H1 (cell line): ENCODE measurements at regions of chr2 and their contacts with region 1.

Region 1: GRCh38 chr2:196453613-196454047 is 185.9 kb upstream of the CCDC150 start:
- DNase-seq: peak in 1 of 2 experiments; percentile 5
- H3K4me3 ChIP-seq: no peak overlapping the region
- H3K27ac ChIP-seq: no peak overlapping the region
- H3K4me1 ChIP-seq: no peaks in the 10 kb centered on the region
- H3K27me3 ChIP-seq: no peaks in the 10 kb centered on the region
- CTCF ChIP-seq: peak; percentile 7 to 68 (median 62)
- EP300 ChIP-seq: no peak
- POLR2A ChIP-seq: no peak
- RAD21 ChIP-seq: peak; percentile 80 to 84

Region 2: DNA sequence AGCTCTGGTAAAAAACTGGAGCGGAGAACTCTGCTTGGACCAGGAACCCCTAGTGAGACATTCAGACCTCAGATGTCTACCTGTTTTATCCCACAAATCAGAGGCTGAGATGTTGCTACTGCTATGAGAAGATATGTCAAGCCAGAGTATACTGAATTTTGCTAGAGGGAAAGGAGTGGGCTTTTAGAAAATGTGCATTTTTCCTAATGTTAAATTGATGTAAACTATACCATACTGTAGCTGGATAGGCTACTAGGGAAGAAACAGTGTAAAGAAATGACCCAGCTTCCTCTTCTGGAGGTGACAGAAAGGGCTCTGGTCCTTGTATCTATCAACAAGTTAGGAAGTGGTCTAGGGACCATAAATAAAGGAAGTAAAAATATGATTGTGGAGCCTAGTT is 731.6 kb before region 1 on chr2:
- CTCF ChIA-PET with region 1: no interaction called
- POLR2A ChIA-PET with region 1: no interaction called
- DNase-seq: no peak
- H3K4me3 ChIP-seq: no peak overlapping the region
- H3K27ac ChIP-seq: no peak overlapping the region
- H3K4me1 ChIP-seq: 0 out of 7 replicates have a peak, but pooled peaks cover 0 to 4% (median 0%) of the 10 kb centered on the region in 4 experiments
- H3K27me3 ChIP-seq: no peaks in the 10 kb centered on the region
- CTCF ChIP-seq: no peak
- EP300 ChIP-seq: no peak
- POLR2A ChIP-seq: no peak
- RAD21 ChIP-seq: no peak

Region 3: DNA sequence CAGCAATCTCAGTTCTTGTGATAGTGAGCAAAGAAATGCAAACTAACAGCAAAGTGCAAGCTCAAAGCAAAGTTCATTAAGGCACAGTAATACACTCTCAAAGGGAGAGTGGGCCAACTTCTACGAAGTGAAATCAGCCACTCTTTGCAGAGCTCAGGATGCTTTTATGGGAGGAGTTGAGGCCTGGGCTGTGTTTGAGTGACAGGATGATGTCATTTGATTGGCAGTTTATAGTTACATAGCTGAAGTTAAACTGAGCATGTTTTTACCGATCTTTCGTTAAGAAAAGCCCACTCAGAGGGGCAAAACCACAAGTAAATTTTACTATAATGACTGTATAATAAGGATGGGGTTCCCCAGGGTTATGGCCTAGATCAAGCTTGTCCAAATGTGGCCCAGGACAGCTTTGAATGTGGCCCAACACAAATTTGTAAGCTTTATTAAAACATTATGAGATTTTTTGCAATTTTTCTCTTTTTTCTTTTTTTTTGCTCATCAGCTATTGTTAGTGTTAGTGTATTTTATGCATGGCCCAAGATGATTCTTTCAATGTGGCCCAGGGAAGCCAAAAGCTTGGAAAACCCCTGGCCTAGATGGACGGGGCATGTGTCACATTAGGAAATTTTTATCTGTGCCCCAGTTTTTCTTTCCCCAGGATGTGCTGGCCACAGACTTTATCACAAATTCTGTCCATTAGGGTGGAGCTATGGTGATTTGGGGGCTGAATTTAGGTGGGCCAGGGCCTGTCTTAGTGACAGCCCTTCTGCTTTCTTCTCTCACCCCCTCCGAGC is 376.7 kb before region 1 on chr2:
- CTCF ChIA-PET with region 1: interaction called, 15 read pairs
- POLR2A ChIA-PET with region 1: no interaction called
- DNase-seq: no peak
- H3K4me3 ChIP-seq: no peak overlapping the region
- H3K27ac ChIP-seq: no peak overlapping the region
- H3K4me1 ChIP-seq: no peaks in the 10 kb centered on the region; a peak in 1 of 7 replicates
- H3K27me3 ChIP-seq: no peaks in the 10 kb centered on the region
- CTCF ChIP-seq: no peak
- EP300 ChIP-seq: no peak
- POLR2A ChIP-seq: no peak
- RAD21 ChIP-seq: no peak

Region 4: GRCh38 chr2:196403471-196403870 is 50.2 kb before region 1 on chr2:
- CTCF ChIA-PET with region 1: interaction called, 16 read pairs
- POLR2A ChIA-PET with region 1: no interaction called
- DNase-seq: no peak
- H3K4me3 ChIP-seq: no peak overlapping the region
- H3K27ac ChIP-seq: no peak overlapping the region
- H3K4me1 ChIP-seq: no peaks in the 10 kb centered on the region
- H3K27me3 ChIP-seq: no peaks in the 10 kb centered on the region
- CTCF ChIP-seq: no peak
- EP300 ChIP-seq: no peak
- POLR2A ChIP-seq: no peak
- RAD21 ChIP-seq: no peak

Region 5: DNA sequence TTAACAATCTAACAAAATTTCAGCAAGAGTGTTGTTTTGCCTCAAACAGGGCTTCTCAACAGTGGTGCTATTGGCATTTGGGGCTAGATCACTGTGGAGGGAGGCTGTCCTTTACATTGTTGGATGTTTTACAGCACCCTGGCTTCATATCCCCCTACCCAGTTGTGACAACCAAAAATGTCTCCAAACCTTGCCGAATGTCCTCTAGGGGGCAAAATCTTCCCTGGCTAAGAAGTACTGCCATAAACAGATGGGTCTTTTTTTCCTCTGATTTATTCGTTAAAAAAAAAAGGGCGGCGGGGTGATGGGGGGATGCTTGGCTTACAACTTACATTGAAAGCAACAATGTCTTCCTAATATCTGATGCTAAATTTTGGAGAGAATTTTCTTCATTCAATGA is 21.7 kb before region 1 on chr2:
- CTCF ChIA-PET with region 1: interaction called, 30 read pairs
- POLR2A ChIA-PET with region 1: no interaction called
- DNase-seq: peak in 1 of 2 experiments; percentile 9
- H3K4me3 ChIP-seq: no peak overlapping the region
- H3K27ac ChIP-seq: no peak overlapping the region
- H3K4me1 ChIP-seq: no peaks in the 10 kb centered on the region
- H3K27me3 ChIP-seq: no peaks in the 10 kb centered on the region
- CTCF ChIP-seq: peak; percentile 19 to 63 (median 59)
- EP300 ChIP-seq: no peak
- POLR2A ChIP-seq: no peak
- RAD21 ChIP-seq: peak; percentile 58 to 69

Region 6: DNA sequence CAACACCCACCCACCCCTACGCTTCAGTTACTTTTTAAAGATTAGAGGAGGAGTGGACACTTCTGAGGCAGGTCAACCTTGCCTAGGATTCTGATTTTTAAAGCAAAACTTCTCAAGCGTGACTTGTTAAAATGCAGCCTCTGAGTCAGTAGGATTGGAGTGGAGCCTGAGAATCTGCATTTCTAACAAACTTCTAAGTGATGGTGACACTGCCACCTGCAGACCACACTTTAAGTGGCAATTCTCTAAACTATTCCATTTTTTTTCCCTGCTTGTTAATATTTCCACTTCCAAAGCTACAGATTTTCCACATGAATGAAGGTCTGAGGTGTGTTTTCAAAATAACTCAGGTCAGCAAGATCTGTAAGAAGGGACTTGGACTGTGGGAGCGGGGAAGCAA is 14.8 kb after region 1 on chr2:
- CTCF ChIA-PET with region 1: interaction called, 44 read pairs
- POLR2A ChIA-PET with region 1: interaction called, 3 read pairs
- DNase-seq: no peak
- H3K4me3 ChIP-seq: no peak overlapping the region
- H3K27ac ChIP-seq: no peak overlapping the region
- H3K4me1 ChIP-seq: no peaks in the 10 kb centered on the region; a peak in 2 of 7 replicates
- H3K27me3 ChIP-seq: no peaks in the 10 kb centered on the region
- CTCF ChIP-seq: peak in 2 of 3 experiments; percentile 45 to 52; a peak in 3 of 4 replicates
- EP300 ChIP-seq: no peak
- POLR2A ChIP-seq: no peak
- RAD21 ChIP-seq: peak; percentile 45 to 60

Region 7: DNA sequence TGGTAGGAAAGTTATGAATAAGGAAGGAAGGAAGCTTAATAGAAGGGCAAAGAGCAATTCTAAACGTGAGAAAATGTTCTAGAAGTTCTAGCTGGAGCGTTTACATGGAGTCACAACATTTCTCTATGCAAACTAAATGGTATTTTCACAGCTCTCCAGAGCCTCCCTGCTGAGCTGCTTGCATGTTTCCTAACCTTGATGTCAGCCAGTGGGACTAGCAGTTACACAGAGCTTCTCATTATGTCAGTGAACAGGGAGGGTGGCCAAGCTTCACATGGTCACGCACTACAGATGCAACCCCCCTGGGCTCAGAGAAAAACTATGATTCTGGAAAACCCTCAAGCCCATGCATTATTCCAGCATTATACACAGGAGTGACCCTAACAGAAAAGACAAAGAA is 32.5 kb after region 1 on chr2:
- CTCF ChIA-PET with region 1: interaction called, 11 read pairs
- POLR2A ChIA-PET with region 1: no interaction called
- DNase-seq: no peak
- H3K4me3 ChIP-seq: no peak overlapping the region
- H3K27ac ChIP-seq: no peak overlapping the region
- H3K4me1 ChIP-seq: no peaks in the 10 kb centered on the region
- H3K27me3 ChIP-seq: no peaks in the 10 kb centered on the region
- CTCF ChIP-seq: no peak
- EP300 ChIP-seq: no peak
- POLR2A ChIP-seq: no peak
- RAD21 ChIP-seq: no peak

Region 8: GRCh38 chr2:196584903-196585302 is 131.3 kb after region 1 on chr2:
- CTCF ChIA-PET with region 1: no interaction called
- POLR2A ChIA-PET with region 1: no interaction called
- DNase-seq: no peak
- H3K4me3 ChIP-seq: no peak overlapping the region
- H3K27ac ChIP-seq: no peak overlapping the region
- H3K4me1 ChIP-seq: no peaks in the 10 kb centered on the region
- H3K27me3 ChIP-seq: no peaks in the 10 kb centered on the region
- CTCF ChIP-seq: no peak
- EP300 ChIP-seq: no peak
- POLR2A ChIP-seq: no peak
- RAD21 ChIP-seq: no peak